BJ (cell line): ENCODE measurements at regions of chr17 and their contacts with region 1.

Region 1: GRCh38 chr17:45247429-45248131 is 14.3 kb downstream of the SPATA32 start:
- DNase-seq: no peak
- H3K4me3 ChIP-seq: peak overlapping the region; percentile 73
- H3K27me3 ChIP-seq: no peaks in the 10 kb centered on the region
- CTCF ChIP-seq: no peak

Region 2: DNA sequence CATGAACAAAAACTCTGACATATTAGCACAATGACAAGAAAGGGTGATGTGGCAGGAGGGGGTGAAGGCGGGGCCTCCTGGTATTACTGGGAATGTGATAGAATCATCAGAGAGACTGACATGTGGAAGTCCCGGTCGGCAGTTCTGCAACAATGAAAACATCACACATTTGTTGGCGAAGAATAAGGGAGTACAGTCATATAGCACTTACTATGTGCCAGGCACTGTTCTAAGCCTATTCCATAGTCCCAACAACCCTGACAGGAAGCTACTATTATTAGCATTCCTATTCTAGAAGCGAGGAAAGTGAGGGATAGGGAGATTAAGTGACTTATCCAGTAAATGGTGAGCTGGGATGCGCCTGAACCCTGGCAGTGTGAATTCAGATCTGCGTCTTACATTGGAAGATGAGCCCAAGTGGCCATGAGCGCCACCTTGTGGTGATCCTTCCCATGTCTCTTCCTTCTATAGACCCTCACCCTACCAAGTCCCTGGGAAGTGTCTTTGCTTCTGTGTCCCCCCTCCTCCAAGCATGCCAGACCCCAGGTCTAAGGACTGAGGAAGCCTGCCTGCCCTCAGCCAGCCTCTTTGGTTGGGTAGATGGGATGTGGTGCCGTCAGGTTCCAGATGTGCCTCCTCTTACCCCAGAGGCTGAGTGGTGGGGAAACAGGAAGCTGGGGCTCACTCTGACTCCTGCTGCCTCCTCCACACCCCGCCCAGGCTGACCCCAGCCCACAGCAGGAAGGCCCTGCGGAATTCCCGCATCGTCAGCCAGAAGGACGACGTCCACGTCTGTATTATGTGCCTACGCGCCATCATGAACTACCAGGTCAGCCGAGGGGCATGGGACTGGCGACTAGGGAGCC is 11.9 kb before region 1 on chr17:
- CTCF ChIA-PET with region 1: interaction called, 13 read pairs
- POLR2A ChIA-PET with region 1: no interaction called
- DNase-seq: no peak
- H3K4me3 ChIP-seq: no peak overlapping the region
- H3K27me3 ChIP-seq: no peaks in the 10 kb centered on the region
- CTCF ChIP-seq: peak; percentile 86